Heart right ventricle (tissue), 16 donors: ENCODE measurements at regions of chr7 and their contacts with region 1.

Region 1: GRCh38 chr7:136868496-136869000 is at the start of gene CHRM2:
- DNase-seq: peak in 1 of 2 donors; percentile 30
- ATAC-seq: peak; percentile 11 to 68 (median 54)
- H3K4me3 ChIP-seq: peak within 1 kb of the TSS; percentile 47 to 67 (median 57)
- H3K27ac ChIP-seq: peak within 1 kb of the TSS; percentile 40 to 92 (median 82)
- H3K4me1 ChIP-seq: peaks cover 0 to 41% (median 5%) of the 10 kb centered on the region in 9 donors
- H3K27me3 ChIP-seq: peaks cover 0 to 41% (median 26%) of the 10 kb centered on the region in 7 donors
- CTCF ChIP-seq: no peak
- total RNA-seq, gene CHRM2: 24.8 to 108 (median 78.0) TPM

Region 2: GRCh38 chr7:136030862-136031318 is 837.7 kb before region 1 on chr7:
- intact Hi-C with region 1: loop called in 1 of 10 experiments (anchors 10 kb)
- DNase-seq: no peak
- ATAC-seq: no peak
- H3K4me3 ChIP-seq: no peak overlapping the region
- H3K27ac ChIP-seq: no peak overlapping the region
- H3K4me1 ChIP-seq: peaks cover 0 to 22% (median 9%) of the 10 kb centered on the region in 9 donors
- H3K27me3 ChIP-seq: no peaks in the 10 kb centered on the region
- CTCF ChIP-seq: no peak

Region 3: GRCh38 chr7:137074386-137075030 is 206.0 kb after region 1 on chr7:
- intact Hi-C with region 1: no loop called
- DNase-seq: no peak
- ATAC-seq: no peak
- H3K4me3 ChIP-seq: no peak overlapping the region
- H3K27ac ChIP-seq: no peak overlapping the region
- H3K4me1 ChIP-seq: peaks cover 0 to 1% (median 0%) of the 10 kb centered on the region in 9 donors
- H3K27me3 ChIP-seq: no peaks in the 10 kb centered on the region
- CTCF ChIP-seq: no peak

Region 4: DNA sequence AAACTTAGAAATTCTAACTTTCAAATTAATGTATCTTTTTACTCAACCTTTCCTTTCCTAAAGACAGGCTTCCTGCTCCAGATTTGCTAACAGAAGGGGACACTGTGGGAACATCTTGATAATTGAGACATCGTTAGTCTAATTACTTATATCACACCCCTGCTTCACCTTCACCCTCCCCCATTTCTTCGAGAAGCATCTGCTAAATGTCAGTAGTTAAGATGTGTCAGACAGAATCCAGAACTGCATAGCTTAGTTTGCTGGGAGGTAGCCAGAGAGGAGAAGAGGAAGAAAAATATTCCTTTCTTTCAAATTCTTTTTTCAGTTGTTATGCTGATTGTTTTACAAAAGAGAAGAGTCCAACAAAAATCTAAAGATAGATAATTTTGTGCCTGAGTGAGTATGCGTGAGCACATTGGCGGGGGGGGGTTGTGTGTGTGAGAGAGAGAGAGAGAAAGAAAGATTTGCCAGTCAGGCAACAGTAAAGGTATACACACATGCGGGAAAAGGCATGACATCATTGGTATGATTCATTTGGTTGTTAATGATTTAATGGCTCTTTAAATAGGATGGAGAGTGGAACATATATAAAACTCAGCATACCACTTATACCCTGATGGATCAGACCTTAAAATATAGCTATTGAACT is 282.6 kb after region 1 on chr7:
- intact Hi-C with region 1: loop called in 1 of 10 experiments (anchors 10 kb)
- DNase-seq: no peak
- ATAC-seq: peak in 5 of 8 donors; percentile 44 to 80 (median 69)
- H3K4me3 ChIP-seq: no peak overlapping the region
- H3K27ac ChIP-seq: peak overlapping the region in 5 of 10 donors; percentile 16 to 61 (median 47)
- H3K4me1 ChIP-seq: peaks cover 0 to 10% (median 0%) of the 10 kb centered on the region in 9 donors
- H3K27me3 ChIP-seq: no peaks in the 10 kb centered on the region
- CTCF ChIP-seq: no peak